ENCODE measurements at regions of chr14 and their contacts with region 1.

Region 1: DNA sequence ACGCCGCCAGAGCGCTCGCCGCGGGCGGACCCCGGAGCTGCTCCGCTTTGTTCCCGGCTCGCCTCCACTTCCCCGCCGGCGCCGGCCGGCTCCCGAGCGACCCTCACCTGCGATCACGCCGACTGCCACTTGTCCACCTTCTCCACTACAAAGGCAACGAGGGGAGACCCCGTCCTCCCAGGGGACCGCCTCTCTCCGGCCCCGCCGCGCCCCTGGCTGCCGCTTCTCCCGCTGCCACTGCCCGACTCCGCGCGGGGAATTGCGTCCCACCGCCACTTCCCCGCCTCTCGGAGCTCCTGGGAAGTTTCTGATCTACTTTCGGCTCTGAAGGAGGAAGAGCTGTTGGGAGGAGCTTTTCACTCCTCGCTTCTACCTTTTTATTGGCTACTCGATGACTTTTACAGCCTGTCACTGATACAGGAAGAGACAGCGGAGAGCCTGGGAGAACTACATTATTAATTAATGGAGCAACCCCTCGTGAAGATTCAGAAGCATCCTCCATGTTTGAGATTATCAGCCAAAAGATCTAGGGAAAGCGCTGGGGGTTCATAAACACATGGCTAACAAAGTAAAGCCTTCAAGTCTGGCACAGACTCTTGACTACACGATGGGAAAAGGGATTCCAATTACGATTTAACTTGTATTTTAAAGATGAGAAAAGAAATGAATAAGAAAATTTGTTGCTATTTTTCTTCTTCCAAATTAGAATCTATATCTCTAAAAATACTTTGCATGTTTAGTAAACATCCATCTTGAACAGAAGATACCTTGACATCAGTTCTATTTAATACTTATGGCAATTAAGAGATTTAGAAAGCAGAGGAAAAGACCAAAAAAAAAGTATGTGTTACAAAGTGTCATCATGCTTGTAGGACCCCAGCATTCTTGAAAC is at the start of gene BAZ1A:
- DNase-seq: peak; percentile 42 to 61
- ATAC-seq: peak; percentile 62
- H3K4me3 ChIP-seq: peak within 1 kb of the TSS; percentile 82 to 98 (median 90)
- H3K27ac ChIP-seq: peak within 1 kb of the TSS; percentile 98 to 100 (median 100)
- H3K4me1 ChIP-seq: peaks cover 16 to 17% of the 10 kb centered on the region in 2 donors
- H3K27me3 ChIP-seq: no peaks in the 10 kb centered on the region
- CTCF ChIP-seq: peak in 3 of 5 experiments; percentile 13 to 42 (median 37)
- POLR2A ChIP-seq: peak; percentile 84 to 95
- total RNA-seq, gene BAZ1A: 11.6 to 18.5 (median 14.7) TPM

Region 2: GRCh38 chr14:34989762-34990161 is 114.5 kb after region 1 on chr14:
- in situ Hi-C with region 1: no loop called
- intact Hi-C with region 1: no loop called
- DNase-seq: no peak
- ATAC-seq: no peak
- H3K4me3 ChIP-seq: no peak overlapping the region
- H3K27ac ChIP-seq: no peak overlapping the region
- H3K4me1 ChIP-seq: peaks cover 6 to 11% of the 10 kb centered on the region in 2 donors
- H3K27me3 ChIP-seq: no peaks in the 10 kb centered on the region
- CTCF ChIP-seq: no peak
- POLR2A ChIP-seq: no peak

Region 3: GRCh38 chr14:35046048-35046741 is 170.9 kb after region 1 on chr14 and contains the start of gene FAM177A1:
- in situ Hi-C with region 1: no loop called
- intact Hi-C with region 1: loop called (anchors 1 kb)
- DNase-seq: peak; percentile 95 to 97
- ATAC-seq: peak; percentile 81 to 90
- H3K4me3 ChIP-seq: peak within 1 kb of the TSS; percentile 77 to 94 (median 88)
- H3K27ac ChIP-seq: peak within 1 kb of the TSS; percentile 90 to 98 (median 94)
- H3K4me1 ChIP-seq: peaks cover 37 to 40% of the 10 kb centered on the region in 2 donors
- H3K27me3 ChIP-seq: no peaks in the 10 kb centered on the region
- CTCF ChIP-seq: no peak
- POLR2A ChIP-seq: peak; percentile 91 to 94
- total RNA-seq, gene FAM177A1: 13.5 to 35.8 (median 21.8) TPM

Region 4: GRCh38 chr14:35159742-35160409 is 284.6 kb after region 1 on chr14:
- in situ Hi-C with region 1: no loop called
- intact Hi-C with region 1: no loop called
- DNase-seq: no peak
- ATAC-seq: no peak
- H3K4me3 ChIP-seq: no peak overlapping the region
- H3K27ac ChIP-seq: no peak overlapping the region
- H3K4me1 ChIP-seq: peaks cover 0 to 4% of the 10 kb centered on the region in 2 donors
- H3K27me3 ChIP-seq: no peaks in the 10 kb centered on the region
- CTCF ChIP-seq: no peak
- POLR2A ChIP-seq: no peak

Measured in gastrocnemius medialis (tissue), 4 donors.